ENCODE measurements at regions of chr10 and their contacts with region 1.

Region 1: GRCh38 chr10:70381471-70382421 is 679 bp downstream of the LRRC20 start:
- DNase-seq: peak; percentile 51
- ATAC-seq: peak; percentile 42
- H3K4me3 Mint-ChIP-seq: peak overlapping the region; percentile 84
- H3K27ac Mint-ChIP-seq: peak overlapping the region; percentile 32
- H3K4me1 Mint-ChIP-seq: peaks cover 3% of the 10 kb centered on the region
- H3K27me3 Mint-ChIP-seq: no peaks in the 10 kb centered on the region
- CTCF ChIP-seq: peak; percentile 31

Region 2: DNA sequence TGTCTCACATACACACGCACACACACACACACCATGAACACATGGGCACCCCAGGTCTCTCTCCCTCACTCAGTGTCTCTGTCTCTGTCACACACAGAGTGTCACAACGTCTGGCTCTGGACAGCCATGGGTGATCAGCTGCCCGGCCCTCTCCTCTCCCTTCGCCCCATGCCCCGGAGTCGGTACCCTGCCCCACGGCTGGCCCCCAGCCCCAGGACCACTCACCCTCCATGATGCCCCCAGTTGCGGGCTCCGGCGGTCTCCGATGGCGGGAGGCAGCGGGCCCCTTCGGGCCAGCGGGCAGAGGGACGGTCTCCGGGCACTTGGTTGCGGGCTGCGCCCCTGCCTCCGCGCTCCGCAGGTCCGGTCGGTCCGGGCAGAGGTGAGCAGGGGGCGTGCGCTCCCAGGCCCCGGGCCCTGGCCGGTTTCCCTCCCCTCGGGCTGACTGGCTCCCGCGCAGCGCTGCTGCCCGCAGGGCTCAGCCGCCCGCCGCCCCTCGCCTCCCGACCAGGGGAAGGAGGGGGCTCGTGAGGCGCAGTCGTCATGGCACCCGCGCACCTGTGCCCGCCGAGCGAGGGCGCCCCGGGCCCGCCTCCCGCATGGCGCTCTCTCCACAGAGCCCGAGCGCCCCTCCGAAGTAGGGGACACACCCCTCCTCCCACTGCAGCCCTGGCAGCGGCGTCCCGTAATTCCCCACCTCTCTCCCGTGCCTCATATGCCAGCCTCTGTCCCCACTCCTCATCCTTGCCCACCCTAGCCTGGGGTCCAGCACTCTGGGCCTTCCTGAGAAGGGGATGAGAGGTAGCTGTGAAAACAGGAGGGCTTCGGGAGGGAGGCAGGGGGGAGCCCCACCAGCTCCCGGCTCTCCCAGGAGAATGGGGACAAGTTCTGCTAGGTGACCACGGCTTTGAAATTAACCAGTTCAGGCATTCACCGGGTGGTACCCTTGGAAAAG is 98.0 kb before region 1 on chr10 and contains the start of gene NPFFR1:
- CTCF ChIA-PET with region 1: no interaction called
- POLR2A ChIA-PET with region 1: no interaction called
- intact Hi-C with region 1: no loop called
- DNase-seq: no peak
- ATAC-seq: peak; percentile 39
- H3K4me3 Mint-ChIP-seq: no peak within 1 kb of the TSS
- H3K27ac Mint-ChIP-seq: no peak within 1 kb of the TSS
- H3K4me1 Mint-ChIP-seq: peaks cover 2% of the 10 kb centered on the region
- H3K27me3 Mint-ChIP-seq: peaks cover 52% of the 10 kb centered on the region
- CTCF ChIP-seq: no peak
- total RNA-seq, gene NPFFR1: not detected

Region 3: DNA sequence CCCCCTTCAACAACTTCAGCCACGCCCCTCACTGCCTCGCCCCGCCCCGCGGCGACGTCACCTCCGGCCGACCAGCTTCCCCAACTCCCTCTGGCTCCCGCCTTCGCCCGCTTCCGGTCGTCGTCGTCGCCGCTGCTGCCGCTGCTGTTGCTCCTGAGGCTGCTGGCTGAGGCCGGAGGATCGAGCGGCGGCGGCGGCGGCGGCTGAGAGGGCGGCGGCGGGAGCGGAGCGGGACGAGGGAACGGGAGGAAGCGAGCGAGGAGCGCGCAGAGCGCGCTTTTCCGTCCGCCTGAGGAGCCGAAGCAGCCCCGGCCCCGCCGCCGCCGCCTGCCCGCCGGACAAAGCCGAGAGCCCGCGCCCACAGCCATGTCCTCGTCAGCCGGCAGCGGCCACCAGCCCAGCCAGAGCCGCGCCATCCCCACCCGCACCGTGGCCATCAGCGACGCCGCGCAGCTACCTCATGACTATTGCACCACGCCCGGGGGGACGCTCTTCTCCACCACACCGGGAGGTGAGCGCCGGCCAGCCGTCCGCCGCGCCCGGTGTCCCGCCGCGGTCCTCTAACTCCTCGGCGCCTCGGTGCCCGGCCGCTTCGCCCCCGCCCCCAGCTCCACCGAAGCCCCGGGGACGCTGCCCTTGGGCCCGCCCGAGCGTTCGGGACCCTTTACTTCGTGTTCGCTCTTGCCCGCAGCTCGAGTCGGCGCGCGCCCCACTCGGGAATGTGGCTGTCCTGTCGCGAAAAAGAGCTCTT is 22.5 kb after region 1 on chr10 and contains the start of gene EIF4EBP2:
- CTCF ChIA-PET with region 1: interaction called, 29 read pairs
- POLR2A ChIA-PET with region 1: interaction called, 5 read pairs
- intact Hi-C with region 1: no loop called
- DNase-seq: peak; percentile 98
- ATAC-seq: peak; percentile 96
- H3K4me3 Mint-ChIP-seq: peak within 1 kb of the TSS; percentile 92
- H3K27ac Mint-ChIP-seq: peak within 1 kb of the TSS; percentile 91
- H3K4me1 Mint-ChIP-seq: peaks cover 36% of the 10 kb centered on the region
- H3K27me3 Mint-ChIP-seq: no peaks in the 10 kb centered on the region
- CTCF ChIP-seq: no peak
- total RNA-seq, gene EIF4EBP2: 23.5 to 24.0 TPM

Measured in activated CD8-positive, alpha-beta T cell treated with anti-CD3 and anti-CD28 coated beads for 36 hours (primary cell).